ENCODE measurements at regions of chr1 and their contacts with region 1.

Region 1: DNA sequence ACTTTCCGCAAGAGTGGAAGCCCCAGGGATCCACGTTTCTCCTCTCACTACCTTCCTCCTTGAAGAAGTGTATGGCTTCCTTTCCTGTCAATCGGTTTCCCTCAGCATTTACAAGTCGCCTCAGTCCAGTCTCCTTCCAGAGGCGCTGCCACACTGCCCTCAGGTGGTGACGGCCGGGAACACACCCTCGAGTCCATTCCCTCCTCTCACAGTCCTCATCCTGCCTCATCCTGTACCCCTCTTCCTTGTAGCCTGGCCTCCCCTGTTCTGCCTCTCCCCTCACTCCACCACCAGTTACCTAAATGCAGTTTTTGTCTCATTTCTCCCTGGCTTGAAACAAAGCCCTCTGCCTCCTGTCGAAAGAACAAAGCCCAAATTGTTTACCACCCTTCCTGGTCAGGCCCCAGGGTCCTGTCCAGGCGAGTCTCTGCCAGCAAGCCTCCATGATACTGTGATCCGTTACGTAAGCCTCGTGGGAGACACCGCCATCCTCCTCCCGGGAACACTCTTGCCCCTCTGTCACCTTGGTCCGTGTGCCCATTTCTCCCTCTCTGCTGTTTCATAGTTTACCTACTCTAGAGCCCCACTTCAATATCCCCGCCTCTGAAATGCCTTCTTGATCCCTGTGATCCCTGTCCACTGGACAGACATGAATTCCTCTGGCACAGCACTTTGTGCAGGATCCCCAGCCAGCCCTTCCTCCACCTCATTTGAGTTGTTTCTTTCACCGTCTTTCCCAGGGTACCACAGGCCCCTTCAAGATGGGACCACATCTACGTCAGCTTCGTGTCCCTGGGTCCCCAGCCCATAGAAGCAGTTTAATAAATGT is 23.3 kb upstream of the LSM10 start:
- DNase-seq: peak; percentile 69 to 86
- ATAC-seq: peak; percentile 85 to 89
- H3K4me3 ChIP-seq: no peak overlapping the region
- H3K27ac ChIP-seq: peak overlapping the region; percentile 7 to 85 (median 35)
- H3K4me1 ChIP-seq: peaks cover 21 to 24% of the 10 kb centered on the region in 2 donors
- H3K27me3 ChIP-seq: no peaks in the 10 kb centered on the region
- CTCF ChIP-seq: peak; percentile 89 to 95 (median 93)
- POLR2A ChIP-seq: no peak

Region 2: GRCh38 chr1:36099681-36100341 is 321.2 kb before region 1 on chr1:
- in situ Hi-C with region 1: loop called (anchors 5 to 10 kb)
- intact Hi-C with region 1: loop called (anchors 1 kb)
- DNase-seq: peak; percentile 25 to 64
- ATAC-seq: peak; percentile 83 to 93
- H3K4me3 ChIP-seq: no peak overlapping the region
- H3K27ac ChIP-seq: no peak overlapping the region
- H3K4me1 ChIP-seq: no peaks in the 10 kb centered on the region
- H3K27me3 ChIP-seq: no peaks in the 10 kb centered on the region
- CTCF ChIP-seq: peak; percentile 64 to 90 (median 86)
- POLR2A ChIP-seq: no peak

Region 3: GRCh38 chr1:36306902-36307456 is 114.1 kb before region 1 on chr1:
- in situ Hi-C with region 1: loop called in 1 of 4 experiments (anchors 25 kb)
- intact Hi-C with region 1: no loop called
- DNase-seq: peak; percentile 72 to 84
- ATAC-seq: peak; percentile 79 to 82
- H3K4me3 ChIP-seq: peak overlapping the region; percentile 65 to 87 (median 75)
- H3K27ac ChIP-seq: peak overlapping the region; percentile 74 to 79 (median 77)
- H3K4me1 ChIP-seq: peaks cover 8 to 15% of the 10 kb centered on the region in 2 donors
- H3K27me3 ChIP-seq: no peaks in the 10 kb centered on the region
- CTCF ChIP-seq: no peak
- POLR2A ChIP-seq: peak; percentile 50 to 61

Region 4: DNA sequence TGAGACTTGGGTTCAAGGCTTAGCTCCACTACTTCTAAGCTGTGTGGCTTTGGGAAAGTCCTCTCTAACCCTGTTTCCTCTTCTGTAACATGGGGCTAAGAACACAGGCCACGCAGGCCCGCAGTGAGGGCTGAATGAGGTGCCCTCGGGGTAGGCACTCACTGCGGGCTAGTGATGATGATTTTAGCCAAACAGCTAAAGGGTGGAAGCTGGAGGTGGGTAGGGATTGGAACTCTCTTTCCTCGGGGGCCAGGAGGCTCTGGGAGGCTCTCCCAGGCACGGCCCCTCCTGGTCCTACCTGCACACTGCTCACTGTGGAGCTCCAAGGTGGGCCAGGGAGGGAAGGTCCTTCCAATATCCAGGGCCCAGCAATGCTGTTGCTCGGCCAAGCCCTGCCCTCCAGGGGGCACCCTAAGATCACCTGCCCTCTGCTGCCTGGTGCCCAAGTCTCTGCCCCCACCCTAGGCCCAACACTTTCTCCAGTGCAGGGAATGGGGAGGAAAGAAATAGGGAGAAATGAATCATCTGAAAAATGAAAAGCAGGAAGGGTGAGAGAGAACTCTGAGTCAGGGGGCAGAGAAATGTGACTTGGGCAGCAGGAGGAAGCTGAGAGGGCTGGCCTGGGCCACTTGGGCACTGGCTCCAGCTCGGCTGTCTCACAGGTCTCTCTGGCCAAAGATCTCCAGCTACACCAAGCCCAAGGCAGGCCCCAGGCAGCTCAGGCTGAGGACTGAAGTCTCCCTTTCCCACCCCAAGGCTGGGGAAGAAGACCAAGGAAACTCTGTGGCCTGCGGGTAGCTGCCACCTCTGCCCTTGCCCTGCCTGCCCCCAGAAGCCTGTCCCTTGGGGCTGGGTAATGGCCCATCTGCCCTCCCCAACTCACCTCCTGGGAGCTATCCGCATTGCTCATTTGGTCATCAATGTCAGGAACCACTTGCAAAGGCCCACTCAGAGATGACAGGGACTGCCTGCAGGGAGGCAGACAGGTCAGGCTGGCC is 78.3 kb before region 1 on chr1:
- in situ Hi-C with region 1: loop called in 3 of 4 experiments (anchors 5 to 10 kb)
- intact Hi-C with region 1: loop called (anchors 1 kb)
- DNase-seq: no peak
- ATAC-seq: peak in 1 of 2 donors; percentile 8
- H3K4me3 ChIP-seq: no peak overlapping the region
- H3K27ac ChIP-seq: peak overlapping the region; percentile 75 to 82 (median 78)
- H3K4me1 ChIP-seq: peaks cover 23 to 27% of the 10 kb centered on the region in 2 donors
- H3K27me3 ChIP-seq: no peaks in the 10 kb centered on the region
- CTCF ChIP-seq: peak; percentile 32 to 77 (median 72)
- POLR2A ChIP-seq: no peak

Region 5: GRCh38 chr1:36350659-36351226 is 70.3 kb before region 1 on chr1:
- in situ Hi-C with region 1: loop called in 3 of 4 experiments (anchors 5 to 10 kb)
- intact Hi-C with region 1: no loop called
- DNase-seq: peak in 1 of 2 donors; percentile 51
- ATAC-seq: peak in 1 of 2 donors; percentile 37
- H3K4me3 ChIP-seq: no peak overlapping the region
- H3K27ac ChIP-seq: peak overlapping the region; percentile 68 to 75 (median 72)
- H3K4me1 ChIP-seq: peaks cover 21 to 32% of the 10 kb centered on the region in 2 donors
- H3K27me3 ChIP-seq: no peaks in the 10 kb centered on the region
- CTCF ChIP-seq: no peak
- POLR2A ChIP-seq: no peak

Region 6: DNA sequence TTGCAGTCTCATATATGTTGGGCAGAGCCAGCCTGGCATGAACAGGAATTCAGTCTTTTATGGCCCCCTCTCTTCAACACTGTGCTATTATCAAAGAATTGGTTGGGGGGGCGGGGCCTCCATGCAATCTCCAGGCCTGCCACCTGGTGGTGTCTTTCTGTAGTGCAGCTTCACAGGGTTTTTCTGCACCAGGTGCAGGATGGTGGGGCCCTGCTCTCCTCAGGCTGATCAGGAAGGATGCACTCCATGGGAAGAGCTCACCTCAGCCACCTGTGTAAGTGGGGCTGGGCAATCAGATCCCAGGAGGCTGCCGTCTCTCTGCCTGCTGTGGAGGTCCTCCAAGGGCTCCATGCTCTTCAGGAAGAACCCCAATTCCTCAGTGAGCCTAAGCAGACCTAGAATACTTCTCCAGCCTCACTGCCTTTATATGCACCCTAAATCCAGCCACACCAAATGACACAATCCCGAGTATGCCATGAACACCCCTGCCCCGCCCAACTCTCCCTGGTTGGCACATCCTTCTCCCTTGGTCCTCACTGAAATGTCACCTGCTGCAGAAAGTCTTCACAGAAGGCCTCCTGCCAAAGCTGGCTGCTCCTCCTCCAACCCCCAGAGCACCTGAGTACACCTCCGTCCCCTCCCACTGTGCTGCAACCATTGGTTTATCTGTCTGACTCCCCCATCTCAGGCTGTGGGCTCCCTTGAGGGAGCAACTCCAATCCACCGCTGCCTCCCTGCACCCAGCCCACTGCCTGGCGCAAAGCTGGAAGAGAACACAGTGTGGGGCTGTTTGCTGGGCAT is 51.8 kb before region 1 on chr1:
- in situ Hi-C with region 1: no loop called
- intact Hi-C with region 1: loop called (anchors 2 kb)
- DNase-seq: peak; percentile 20 to 63
- ATAC-seq: peak; percentile 13 to 32
- H3K4me3 ChIP-seq: no peak overlapping the region
- H3K27ac ChIP-seq: peak overlapping the region in 2 of 4 donors; percentile 28 to 31
- H3K4me1 ChIP-seq: peaks cover 47 to 68% of the 10 kb centered on the region in 2 donors
- H3K27me3 ChIP-seq: no peaks in the 10 kb centered on the region
- CTCF ChIP-seq: peak; percentile 85 to 95 (median 93)
- POLR2A ChIP-seq: no peak

Region 7: GRCh38 chr1:36450270-36450918 is 29.3 kb after region 1 on chr1 and contains the start of gene OSCP1:
- in situ Hi-C with region 1: no loop called
- intact Hi-C with region 1: no loop called
- DNase-seq: peak; percentile 89 to 94
- ATAC-seq: peak; percentile 98 to 99
- H3K4me3 ChIP-seq: peak within 1 kb of the TSS; percentile 73 to 85 (median 76)
- H3K27ac ChIP-seq: peak within 1 kb of the TSS; percentile 90 to 97 (median 95)
- H3K4me1 ChIP-seq: peaks cover 5 to 11% of the 10 kb centered on the region in 2 donors
- H3K27me3 ChIP-seq: no peaks in the 10 kb centered on the region
- CTCF ChIP-seq: no peak
- POLR2A ChIP-seq: peak; percentile 84 to 92
- total RNA-seq, gene OSCP1: 3.3 to 6.7 (median 4.7) TPM